ENCODE measurements at regions of chr19 and their contacts with region 1.

Region 1: DNA sequence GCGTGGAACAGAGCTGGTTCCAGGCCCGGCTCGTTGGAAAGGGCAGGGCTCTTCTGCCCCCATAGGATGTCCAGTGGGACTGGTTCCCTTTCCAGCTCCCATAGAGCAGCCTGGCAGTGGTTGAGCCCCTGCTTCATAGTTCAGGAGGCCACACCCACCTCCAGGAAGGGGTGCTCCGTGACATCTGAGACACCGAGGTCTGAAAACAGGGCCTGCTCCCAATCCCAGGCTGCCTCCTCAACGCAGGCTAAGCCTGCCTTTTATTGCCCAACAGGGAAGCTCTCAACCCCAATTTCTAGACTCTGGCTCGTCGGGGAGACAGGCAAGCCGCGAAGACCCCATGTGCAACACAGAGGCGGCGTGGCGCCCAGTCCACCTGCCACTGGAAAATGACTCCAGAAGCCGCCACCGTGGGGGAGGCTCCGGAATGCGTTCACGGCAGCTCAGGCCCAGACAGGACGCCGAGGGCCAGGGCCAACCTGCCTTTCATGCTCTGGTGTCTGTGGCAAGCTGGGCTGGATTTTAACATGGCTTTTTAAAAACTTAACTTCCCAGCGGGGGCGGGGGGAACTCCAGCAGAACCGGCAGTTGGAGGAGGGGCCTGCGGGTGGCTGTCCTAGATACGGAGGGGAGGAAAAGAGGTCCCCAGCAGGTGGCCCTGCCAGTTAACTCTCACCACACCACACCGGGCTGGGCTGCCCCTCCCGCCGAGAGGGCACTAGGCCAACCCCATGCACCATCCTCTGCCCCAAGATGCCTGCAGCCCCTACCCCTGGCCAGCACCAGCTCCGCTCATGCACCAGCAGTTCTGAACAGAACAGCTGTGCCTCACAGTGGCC is 17.9 kb upstream of the TINCR start:
- DNase-seq: peak; percentile 83

Region 2: DNA sequence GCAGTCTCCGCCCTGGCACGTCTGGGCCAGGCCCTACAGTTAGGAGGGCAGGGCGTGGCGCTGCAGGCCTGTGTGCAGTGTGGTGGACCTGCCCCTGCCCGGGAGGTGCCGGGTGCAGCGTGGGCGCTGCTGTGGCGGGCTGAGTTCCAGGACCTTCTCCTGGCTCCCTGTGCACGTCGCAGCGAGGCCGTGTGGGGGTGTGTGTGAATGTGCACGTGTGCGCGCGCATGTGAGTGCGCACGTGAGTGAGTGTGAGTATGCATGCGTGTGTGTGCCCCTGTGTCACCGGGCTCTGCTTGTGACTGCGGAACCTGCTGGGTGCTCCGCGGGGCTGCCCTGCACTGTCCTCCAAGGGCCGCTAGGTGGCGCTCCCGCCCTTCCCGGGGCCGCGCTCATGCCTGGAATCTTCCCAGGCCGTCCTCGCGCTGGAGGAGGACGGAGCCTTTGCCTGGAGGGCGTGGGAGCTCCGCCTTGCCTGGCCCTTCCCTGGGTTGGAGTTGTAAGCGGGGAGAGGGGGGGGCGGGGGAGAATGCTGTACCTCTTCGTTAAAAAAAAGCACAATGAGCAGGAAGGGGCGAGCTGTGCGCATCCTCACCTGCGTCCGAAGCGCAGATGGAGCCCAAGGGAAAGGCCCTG is 537.5 kb before region 1 on chr19:
- intact Hi-C with region 1: loop called in 1 of 2 experiments (anchors 10 kb)
- DNase-seq: peak; percentile 95

Region 3: DNA sequence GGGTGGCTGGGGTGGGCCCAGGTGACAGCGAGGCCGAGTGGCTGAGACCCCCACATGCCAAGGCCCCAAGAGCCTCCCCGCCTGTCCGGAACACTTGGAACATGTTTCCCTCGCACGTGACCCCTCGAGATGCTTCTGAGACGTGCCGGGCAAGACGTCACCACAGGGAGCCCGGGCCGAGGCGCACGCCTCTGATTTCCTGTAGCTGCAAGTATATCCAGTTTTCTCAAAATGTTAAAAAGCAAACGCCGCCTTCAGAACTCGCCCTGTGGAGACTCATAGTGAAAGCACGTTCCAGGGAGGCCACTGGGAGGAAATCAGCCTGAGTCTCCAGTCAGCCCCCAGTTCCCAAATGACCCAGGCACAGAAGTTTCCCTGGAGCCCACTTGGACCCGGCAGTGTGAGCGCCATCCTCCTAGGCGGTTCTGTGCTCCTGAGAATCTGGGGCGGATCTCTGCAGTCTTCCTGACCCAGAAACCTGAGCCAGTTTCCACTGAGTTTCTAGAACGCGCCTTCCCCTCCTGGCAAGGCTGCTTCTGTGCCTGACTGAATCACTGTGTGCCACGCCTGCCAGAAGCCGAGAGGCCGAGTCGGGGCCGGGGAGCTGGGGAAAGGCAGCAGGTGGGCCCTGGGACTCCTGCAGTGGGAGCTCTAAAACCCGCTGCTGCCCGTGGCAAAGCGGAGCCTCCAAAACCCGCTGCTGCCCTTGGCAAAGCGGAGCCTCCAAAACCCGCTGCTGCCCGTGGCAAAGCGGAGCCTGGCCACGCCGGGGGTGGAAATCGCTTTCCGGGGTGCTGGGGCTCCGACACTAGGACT is 437.5 kb before region 1 on chr19:
- intact Hi-C with region 1: loop called in 1 of 2 experiments (anchors 10 kb)
- DNase-seq: peak; percentile 89

Region 4: DNA sequence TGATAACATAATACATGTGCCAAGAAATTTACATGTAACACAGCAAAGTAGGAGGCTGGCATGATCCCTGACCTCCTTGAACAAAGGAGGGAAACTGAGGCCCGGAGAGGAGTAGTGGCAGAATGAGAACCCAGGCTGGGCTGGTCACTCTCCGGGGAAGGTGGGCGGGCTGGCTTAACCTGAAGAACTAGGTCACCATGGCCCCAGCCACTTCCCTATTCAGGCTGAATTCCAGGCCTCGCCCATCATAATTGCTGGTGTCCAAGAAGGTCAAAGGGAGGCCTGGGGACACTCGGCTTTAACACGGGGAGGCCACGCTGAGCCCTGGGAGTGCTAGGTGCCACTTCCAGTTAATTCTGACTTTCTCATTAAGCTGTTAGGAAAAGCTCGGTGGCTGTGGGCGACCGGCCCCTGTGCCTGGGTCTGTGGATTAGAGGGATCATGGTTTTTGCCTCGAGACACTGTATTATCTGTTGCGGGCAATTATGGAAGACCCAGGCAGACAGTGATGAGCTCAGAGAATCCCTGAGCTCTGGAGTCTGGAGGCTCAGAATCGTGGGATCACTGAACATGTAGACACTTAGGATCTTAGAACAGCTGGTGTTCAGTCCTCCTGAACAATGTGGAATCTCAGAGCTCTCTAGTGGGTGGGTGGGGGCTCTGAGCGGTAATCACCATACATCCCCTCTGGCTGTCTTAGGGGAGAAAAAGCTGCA is 13.0 kb before region 1 on chr19:
- intact Hi-C with region 1: no loop called
- DNase-seq: no peak

Region 5: GRCh38 chr19:5762608-5763217 is 177.0 kb after region 1 on chr19:
- intact Hi-C with region 1: no loop called
- DNase-seq: no peak

Measured in posterior vena cava (tissue), 2 donors.